ENCODE measurements at regions of chr4 and their contacts with region 1.

Region 1: GRCh38 chr4:48340965-48341775 is at the start of gene SLAIN2:
- DNase-seq: peak; percentile 95 to 100 (median 97)
- H3K4me3 ChIP-seq: peak within 1 kb of the TSS; percentile 68 to 90
- H3K4me3 Mint-ChIP-seq: peak within 1 kb of the TSS; percentile 96 to 98 (median 97)
- H3K27ac ChIP-seq: peak within 1 kb of the TSS; percentile 89
- H3K27ac Mint-ChIP-seq: peak within 1 kb of the TSS; percentile 97 to 100 (median 98)
- H3K4me1 ChIP-seq: peaks cover 52% of the 10 kb centered on the region
- H3K4me1 Mint-ChIP-seq: peaks cover 33 to 58% (median 42%) of the 10 kb centered on the region in 4 donors
- H3K27me3 ChIP-seq: no peaks in the 10 kb centered on the region
- H3K27me3 Mint-ChIP-seq: no peaks in the 10 kb centered on the region
- total RNA-seq, gene SLAIN2: 84.4 to 87.5 TPM

Region 2: DNA sequence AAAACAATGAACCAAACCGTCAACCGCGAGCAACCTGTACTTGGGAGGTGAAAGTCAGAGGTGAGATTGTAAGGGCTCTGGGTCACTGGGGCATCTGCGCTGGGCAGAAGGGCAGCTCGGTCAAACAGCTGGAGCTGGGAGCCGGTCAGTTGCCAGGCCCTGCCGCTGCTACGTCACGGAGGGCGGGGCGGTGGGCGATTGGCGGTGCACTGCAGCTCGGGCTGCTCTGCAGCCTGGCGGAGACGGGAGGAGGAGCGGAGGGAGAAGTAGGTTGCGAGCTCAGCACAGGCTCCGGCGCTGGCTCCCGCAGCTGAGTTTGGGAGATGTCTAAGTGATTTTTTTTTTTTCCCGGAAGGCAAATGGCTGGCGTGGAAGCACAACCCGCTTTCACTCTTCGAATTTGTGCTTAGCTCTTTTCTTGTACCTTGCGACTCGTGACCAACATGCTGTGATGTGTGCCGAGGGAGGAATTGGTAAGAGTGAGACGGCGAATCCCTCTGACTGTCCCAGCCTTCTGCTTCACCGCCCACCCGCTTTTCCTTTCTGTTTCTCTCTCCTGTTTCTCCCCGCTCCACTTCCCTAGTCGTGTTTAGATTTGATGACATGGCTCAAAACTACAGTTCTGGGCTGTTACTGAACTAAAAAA is 856.0 kb before region 1 on chr4 and contains the start of gene ATP10D:
- CTCF ChIA-PET with region 1: no interaction called
- POLR2A ChIA-PET with region 1: no interaction called
- intact Hi-C with region 1: loop called (anchors 5 kb)
- DNase-seq: peak; percentile 65 to 75 (median 67)
- H3K4me3 ChIP-seq: peak within 1 kb of the TSS; percentile 58 to 86
- H3K4me3 Mint-ChIP-seq: peak within 1 kb of the TSS; percentile 90 to 99 (median 95)
- H3K27ac ChIP-seq: peak within 1 kb of the TSS; percentile 46
- H3K27ac Mint-ChIP-seq: peak within 1 kb of the TSS; percentile 74 to 98 (median 94)
- H3K4me1 ChIP-seq: peaks cover 14% of the 10 kb centered on the region
- H3K4me1 Mint-ChIP-seq: peaks cover 7 to 32% (median 25%) of the 10 kb centered on the region in 4 donors
- H3K27me3 ChIP-seq: no peaks in the 10 kb centered on the region
- H3K27me3 Mint-ChIP-seq: no peaks in the 10 kb centered on the region
- total RNA-seq, gene ATP10D: 3.1 to 4.2 TPM

Region 3: GRCh38 chr4:48133669-48134068 is 207.5 kb before region 1 on chr4:
- CTCF ChIA-PET with region 1: interaction called, 3 read pairs
- POLR2A ChIA-PET with region 1: interaction called, 7 read pairs
- intact Hi-C with region 1: loop called (anchors 2 kb)
- DNase-seq: no peak
- H3K4me3 ChIP-seq: peak overlapping the region; percentile 59 to 68
- H3K4me3 Mint-ChIP-seq: peak overlapping the region; percentile 93 to 98 (median 96)
- H3K27ac ChIP-seq: peak overlapping the region; percentile 62
- H3K27ac Mint-ChIP-seq: peak overlapping the region; percentile 78 to 98 (median 96)
- H3K4me1 ChIP-seq: peaks cover 78% of the 10 kb centered on the region
- H3K4me1 Mint-ChIP-seq: peaks cover 66 to 95% (median 74%) of the 10 kb centered on the region in 4 donors
- H3K27me3 ChIP-seq: no peaks in the 10 kb centered on the region
- H3K27me3 Mint-ChIP-seq: no peaks in the 10 kb centered on the region

Region 4: GRCh38 chr4:48153791-48154550 is 187.2 kb before region 1 on chr4:
- CTCF ChIA-PET with region 1: no interaction called
- POLR2A ChIA-PET with region 1: no interaction called
- intact Hi-C with region 1: no loop called
- DNase-seq: no peak
- H3K4me3 ChIP-seq: no peak overlapping the region
- H3K4me3 Mint-ChIP-seq: no peak overlapping the region
- H3K27ac ChIP-seq: no peak overlapping the region
- H3K27ac Mint-ChIP-seq: no peak overlapping the region
- H3K4me1 ChIP-seq: no peaks in the 10 kb centered on the region
- H3K4me1 Mint-ChIP-seq: no peaks in the 10 kb centered on the region
- H3K27me3 ChIP-seq: no peaks in the 10 kb centered on the region
- H3K27me3 Mint-ChIP-seq: no peaks in the 10 kb centered on the region

Region 5: GRCh38 chr4:48315728-48316630 is 25.2 kb before region 1 on chr4:
- CTCF ChIA-PET with region 1: interaction called, 6 read pairs
- POLR2A ChIA-PET with region 1: no interaction called
- intact Hi-C with region 1: loop called (anchors 1 kb)
- DNase-seq: peak; percentile 36 to 43 (median 41)
- H3K4me3 ChIP-seq: no peak overlapping the region
- H3K4me3 Mint-ChIP-seq: no peak overlapping the region
- H3K27ac ChIP-seq: no peak overlapping the region
- H3K27ac Mint-ChIP-seq: no peak overlapping the region
- H3K4me1 ChIP-seq: no peaks in the 10 kb centered on the region
- H3K4me1 Mint-ChIP-seq: no peaks in the 10 kb centered on the region
- H3K27me3 ChIP-seq: no peaks in the 10 kb centered on the region
- H3K27me3 Mint-ChIP-seq: no peaks in the 10 kb centered on the region

Region 6: DNA sequence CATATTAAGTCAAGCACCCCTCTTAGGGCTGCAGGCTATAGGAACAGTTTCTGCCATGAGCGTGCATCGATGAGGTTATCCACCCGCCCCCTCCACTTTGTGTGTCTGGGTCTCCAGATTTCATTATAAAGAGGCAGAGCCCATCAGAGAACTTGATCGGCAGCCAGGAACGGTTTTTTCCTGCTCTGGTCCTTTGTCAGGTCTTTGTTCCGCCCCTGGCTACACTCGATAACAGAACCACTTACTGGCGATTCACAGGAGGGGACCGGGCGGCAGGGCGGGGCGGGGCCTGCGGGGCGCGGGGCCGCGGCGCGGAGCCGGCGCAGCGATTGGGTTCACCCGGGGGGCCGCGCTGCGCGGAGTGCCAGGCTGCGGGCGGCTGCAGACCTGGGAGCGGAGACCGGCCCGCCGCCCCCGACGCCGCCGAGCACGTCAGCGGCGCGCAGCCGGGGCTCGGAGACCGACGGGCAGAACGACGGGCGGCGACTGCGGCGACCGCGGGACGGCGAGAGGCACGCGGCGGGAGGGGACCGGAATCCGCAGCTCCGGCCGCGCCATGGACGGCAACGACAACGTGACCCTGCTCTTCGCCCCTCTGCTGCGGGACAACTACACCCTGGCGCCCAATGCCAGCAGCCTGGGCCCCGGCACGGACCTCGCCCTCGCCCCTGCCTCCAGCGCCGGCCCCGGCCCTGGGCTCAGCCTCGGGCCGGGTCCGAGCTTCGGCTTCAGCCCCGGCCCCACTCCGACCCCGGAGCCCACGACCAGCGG is 142.0 kb after region 1 on chr4 and contains the start of gene SLC10A4:
- CTCF ChIA-PET with region 1: no interaction called
- POLR2A ChIA-PET with region 1: no interaction called
- intact Hi-C with region 1: loop called (anchors 5 kb)
- DNase-seq: no peak
- H3K4me3 ChIP-seq: peak within 1 kb of the TSS in 1 of 2 donors; percentile 28
- H3K4me3 Mint-ChIP-seq: peak within 1 kb of the TSS; percentile 66 to 89 (median 76)
- H3K27ac ChIP-seq: no peak within 1 kb of the TSS
- H3K27ac Mint-ChIP-seq: no peak within 1 kb of the TSS
- H3K4me1 ChIP-seq: peaks cover 11% of the 10 kb centered on the region
- H3K4me1 Mint-ChIP-seq: peaks cover 12 to 13% (median 13%) of the 10 kb centered on the region in 4 donors
- H3K27me3 ChIP-seq: peaks cover 26% of the 10 kb centered on the region
- H3K27me3 Mint-ChIP-seq: peaks cover 45 to 47% of the 10 kb centered on the region in 2 donors
- total RNA-seq, gene SLC10A4: 0.17 TPM in 1 of 2 experiments, not detected in the other

Region 7: DNA sequence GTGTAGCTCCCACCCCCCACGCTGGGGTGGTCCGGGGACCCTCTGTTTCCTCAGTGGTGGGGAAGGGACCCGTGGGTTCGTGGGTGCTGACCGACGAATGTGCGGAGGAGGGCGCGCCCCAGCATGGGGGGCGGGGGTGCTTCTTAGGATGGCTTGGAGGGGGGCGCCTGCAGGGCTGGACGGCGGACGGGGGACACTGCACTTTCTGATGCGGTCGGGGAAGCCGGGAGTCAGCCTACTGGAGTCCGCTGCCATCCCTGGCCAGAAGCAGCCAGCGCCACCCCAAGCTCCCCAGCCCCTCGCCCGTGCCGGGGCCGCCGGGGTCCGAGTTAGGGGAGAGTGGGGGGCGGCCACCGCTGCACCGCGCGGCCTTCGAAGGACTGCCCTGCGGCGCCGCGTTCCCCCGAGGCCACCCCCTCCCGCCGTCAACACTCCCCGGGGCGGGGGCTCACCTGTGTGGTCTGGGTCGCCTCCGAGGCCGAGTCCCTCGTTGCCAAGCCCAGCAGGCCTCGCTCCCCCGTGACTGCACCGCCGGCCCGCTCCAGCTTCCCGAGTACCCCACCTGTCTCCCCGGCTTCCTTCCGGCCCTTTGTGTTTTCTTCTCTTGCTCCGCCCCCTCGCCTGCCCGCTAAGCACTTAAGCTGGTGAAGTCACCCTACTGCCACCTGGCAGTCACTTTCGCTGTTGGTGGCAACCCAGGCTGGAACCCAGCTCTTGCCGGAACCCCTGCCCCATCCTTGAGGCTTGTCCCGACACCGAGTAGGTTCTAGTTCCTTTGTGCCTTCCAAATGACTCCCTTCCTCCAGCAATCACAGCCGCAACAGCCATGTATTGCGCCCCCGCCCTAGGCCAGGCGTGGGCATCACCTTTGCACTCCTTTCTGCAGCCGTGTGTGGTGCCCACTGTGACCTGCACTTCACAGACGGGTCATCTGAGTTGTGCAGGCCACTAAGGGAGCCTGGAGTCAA is 565.3 kb after region 1 on chr4 and contains the start of gene OCIAD2:
- CTCF ChIA-PET with region 1: no interaction called
- POLR2A ChIA-PET with region 1: no interaction called
- intact Hi-C with region 1: loop called (anchors 10 kb)
- DNase-seq: peak; percentile 80 to 89 (median 82)
- H3K4me3 ChIP-seq: peak within 1 kb of the TSS; percentile 70 to 77
- H3K4me3 Mint-ChIP-seq: peak within 1 kb of the TSS; percentile 92 to 98 (median 93)
- H3K27ac ChIP-seq: peak within 1 kb of the TSS; percentile 59
- H3K27ac Mint-ChIP-seq: peak within 1 kb of the TSS; percentile 83 to 97 (median 94)
- H3K4me1 ChIP-seq: peaks cover 39% of the 10 kb centered on the region
- H3K4me1 Mint-ChIP-seq: peaks cover 31 to 55% (median 38%) of the 10 kb centered on the region in 4 donors
- H3K27me3 ChIP-seq: no peaks in the 10 kb centered on the region
- H3K27me3 Mint-ChIP-seq: no peaks in the 10 kb centered on the region
- total RNA-seq, gene OCIAD2: 102 to 108 TPM